ENCODE measurements at regions of chr1 and their contacts with region 1.

Region 1: GRCh38 chr1:63773815-63774616 is at the start of gene ROR1:
- DNase-seq: peak; percentile 87
- H3K4me3 Mint-ChIP-seq: peak within 1 kb of the TSS; percentile 88
- H3K27ac Mint-ChIP-seq: no peak within 1 kb of the TSS
- H3K4me1 Mint-ChIP-seq: peaks cover 12% of the 10 kb centered on the region
- H3K27me3 Mint-ChIP-seq: peaks cover 68% of the 10 kb centered on the region
- total RNA-seq, gene ROR1: 0.09 TPM in 1 of 2 replicates, not detected in the other

Region 2: GRCh38 chr1:63498106-63498505 is 275.9 kb before region 1 on chr1:
- intact Hi-C with region 1: no loop called
- DNase-seq: no peak
- H3K4me3 Mint-ChIP-seq: no peak overlapping the region
- H3K27ac Mint-ChIP-seq: no peak overlapping the region
- H3K4me1 Mint-ChIP-seq: peaks cover 3% of the 10 kb centered on the region
- H3K27me3 Mint-ChIP-seq: no peaks in the 10 kb centered on the region

Region 3: GRCh38 chr1:63758791-63759190 is 15.2 kb before region 1 on chr1:
- intact Hi-C with region 1: loop called (anchors 2 kb)
- DNase-seq: no peak
- H3K4me3 Mint-ChIP-seq: no peak overlapping the region
- H3K27ac Mint-ChIP-seq: no peak overlapping the region
- H3K4me1 Mint-ChIP-seq: no peaks in the 10 kb centered on the region
- H3K27me3 Mint-ChIP-seq: peaks cover 26% of the 10 kb centered on the region

Region 4: GRCh38 chr1:64136752-64137411 is 362.9 kb after region 1 on chr1:
- intact Hi-C with region 1: loop called (anchors 5 kb)
- DNase-seq: peak; percentile 90
- H3K4me3 Mint-ChIP-seq: no peak overlapping the region
- H3K27ac Mint-ChIP-seq: no peak overlapping the region
- H3K4me1 Mint-ChIP-seq: no peaks in the 10 kb centered on the region
- H3K27me3 Mint-ChIP-seq: peaks cover 3% of the 10 kb centered on the region

Region 5: DNA sequence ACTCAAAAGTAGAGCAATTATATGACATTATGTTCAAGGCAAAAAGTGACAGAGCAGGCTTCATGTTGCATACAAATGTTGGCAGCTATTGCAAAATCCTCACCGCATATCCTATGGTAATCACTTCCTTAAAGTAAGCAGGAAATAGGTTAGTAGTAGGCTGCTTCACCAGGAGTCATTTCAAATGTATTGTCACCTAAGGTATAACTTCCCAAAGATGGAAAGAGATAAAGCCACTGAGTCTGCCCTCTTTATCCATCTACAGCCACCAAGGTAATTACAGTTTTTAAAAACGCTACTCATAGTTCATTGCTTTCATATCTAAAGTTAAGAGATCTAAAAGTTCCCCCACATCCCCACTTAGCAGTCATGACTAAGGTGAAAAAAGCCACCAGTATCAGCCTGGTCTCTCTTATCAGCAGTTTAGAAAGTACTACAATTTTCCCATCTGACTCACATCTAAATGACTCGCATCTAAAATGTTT is 397.8 kb after region 1 on chr1:
- intact Hi-C with region 1: no loop called
- DNase-seq: no peak
- H3K4me3 Mint-ChIP-seq: no peak overlapping the region
- H3K27ac Mint-ChIP-seq: peak overlapping the region; percentile 59
- H3K4me1 Mint-ChIP-seq: peaks cover 14% of the 10 kb centered on the region
- H3K27me3 Mint-ChIP-seq: peaks cover 12% of the 10 kb centered on the region

Measured in activated CD4-positive, alpha-beta T cell treated with anti-CD3 and anti-CD28 coated beads, Interleukin-2, amount 10 ng/mL, durations not matched to agents 24 days and 14 days (primary cell).